CD14-positive monocyte (primary cell): ENCODE measurements at regions of chr1 and their contacts with region 1.

Region 1: DNA sequence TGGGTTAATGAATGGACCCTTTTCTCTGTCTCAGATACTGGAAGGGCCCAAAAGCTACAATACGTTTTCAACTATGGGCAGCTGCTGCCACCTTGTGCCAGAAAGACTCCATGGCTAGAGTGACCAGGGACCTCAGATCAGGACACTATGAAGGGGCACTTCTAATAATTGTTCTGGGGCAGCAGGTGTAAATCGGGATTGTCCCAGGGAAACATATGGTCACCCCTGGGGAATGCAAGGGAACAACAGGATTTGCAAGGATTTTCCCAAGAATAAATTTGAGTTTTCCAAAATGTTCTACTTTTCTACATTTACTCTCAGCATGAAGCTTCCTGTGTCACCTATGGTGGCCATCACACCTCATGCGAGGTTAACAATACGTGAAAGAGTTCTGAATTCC is 12.0 kb upstream of the FCAMR start:
- DNase-seq: peak; percentile 42 to 64 (median 62)
- H3K4me3 ChIP-seq: no peak overlapping the region
- H3K4me3 Mint-ChIP-seq: no peak overlapping the region
- H3K27ac ChIP-seq: no peak overlapping the region
- H3K27ac Mint-ChIP-seq: no peak overlapping the region
- H3K4me1 ChIP-seq: no peaks in the 10 kb centered on the region
- H3K4me1 Mint-ChIP-seq: no peaks in the 10 kb centered on the region
- H3K27me3 ChIP-seq: peaks cover 0 to 4% of the 10 kb centered on the region in 2 donors
- H3K27me3 Mint-ChIP-seq: peaks cover 6 to 14% (median 9%) of the 10 kb centered on the region in 3 donors
- CTCF ChIP-seq: peak; percentile 87

Region 2: GRCh38 chr1:206635080-206635977 is 346.9 kb before region 1 on chr1 and contains the start of gene DYRK3:
- intact Hi-C with region 1: loop called in 1 of 2 experiments (anchors 5 kb)
- DNase-seq: peak; percentile 86 to 90 (median 87)
- H3K4me3 ChIP-seq: peak within 1 kb of the TSS; percentile 38 to 79 (median 72)
- H3K4me3 Mint-ChIP-seq: peak within 1 kb of the TSS; percentile 75 to 90
- H3K27ac ChIP-seq: no peak within 1 kb of the TSS
- H3K27ac Mint-ChIP-seq: peak within 1 kb of the TSS in 6 of 7 donors; percentile 18 to 89 (median 71)
- H3K4me1 ChIP-seq: peaks cover 16 to 22% of the 10 kb centered on the region in 2 donors
- H3K4me1 Mint-ChIP-seq: peaks cover 17% of the 10 kb centered on the region
- H3K27me3 ChIP-seq: peaks cover 5 to 15% of the 10 kb centered on the region in 2 donors
- H3K27me3 Mint-ChIP-seq: peaks cover 11 to 34% (median 26%) of the 10 kb centered on the region in 3 donors
- CTCF ChIP-seq: no peak
- polyA plus RNA-seq, gene DYRK3: 0.13 TPM in 1 of 3 donors, not detected in the others

Region 3: GRCh38 chr1:206725109-206725963 is 256.9 kb before region 1 on chr1:
- intact Hi-C with region 1: loop called in 1 of 2 experiments (anchors 2 kb)
- DNase-seq: peak; percentile 44 to 58 (median 50)
- H3K4me3 ChIP-seq: no peak overlapping the region
- H3K4me3 Mint-ChIP-seq: no peak overlapping the region
- H3K27ac ChIP-seq: no peak overlapping the region
- H3K27ac Mint-ChIP-seq: peak overlapping the region in 4 of 7 donors; percentile 12 to 67 (median 49)
- H3K4me1 ChIP-seq: peaks cover 32 to 54% of the 10 kb centered on the region in 2 donors
- H3K4me1 Mint-ChIP-seq: peaks cover 74% of the 10 kb centered on the region
- H3K27me3 ChIP-seq: no peaks in the 10 kb centered on the region
- H3K27me3 Mint-ChIP-seq: peaks cover 0 to 5% (median 4%) of the 10 kb centered on the region in 3 donors
- CTCF ChIP-seq: no peak

Region 4: DNA sequence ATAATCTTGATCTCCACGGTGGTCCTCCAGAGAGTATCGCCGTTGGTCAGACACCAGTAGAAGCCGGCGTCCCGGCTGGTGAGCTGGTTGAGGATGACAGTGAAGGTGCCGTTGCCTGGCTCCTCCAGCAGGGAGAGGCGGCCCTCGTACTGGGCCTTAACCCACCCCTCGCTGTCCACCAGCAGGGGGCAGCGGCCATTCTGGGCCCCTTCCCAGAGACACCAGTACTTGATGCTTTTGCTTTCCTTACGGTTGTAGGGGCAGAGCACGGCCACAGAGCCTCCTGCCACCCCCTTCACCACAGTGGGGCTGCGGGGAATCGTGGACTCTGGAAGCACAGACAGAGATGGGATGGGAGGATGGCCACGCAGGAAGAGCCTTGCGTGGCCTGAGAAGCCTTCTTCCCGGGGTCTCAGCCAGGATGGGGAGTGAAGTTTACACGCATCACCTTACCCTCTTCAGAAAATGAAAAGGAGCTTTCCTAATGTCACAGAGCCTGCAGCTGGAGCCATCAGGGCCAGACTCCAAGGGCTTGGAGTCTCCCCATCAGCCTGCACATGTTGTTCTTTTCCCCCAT is 46.6 kb before region 1 on chr1:
- intact Hi-C with region 1: loop called (anchors 2 to 5 kb)
- DNase-seq: peak; percentile 63 to 68 (median 64)
- H3K4me3 ChIP-seq: no peak overlapping the region
- H3K4me3 Mint-ChIP-seq: no peak overlapping the region
- H3K27ac ChIP-seq: no peak overlapping the region
- H3K27ac Mint-ChIP-seq: no peak overlapping the region
- H3K4me1 ChIP-seq: peaks cover 10 to 17% of the 10 kb centered on the region in 2 donors
- H3K4me1 Mint-ChIP-seq: peaks cover 17% of the 10 kb centered on the region
- H3K27me3 ChIP-seq: no peaks in the 10 kb centered on the region
- H3K27me3 Mint-ChIP-seq: peaks cover 4 to 9% (median 7%) of the 10 kb centered on the region in 3 donors
- CTCF ChIP-seq: peak; percentile 84